Heart right ventricle (tissue), 16 donors: ENCODE measurements at regions of chr1 and their contacts with region 1.

Region 1: GRCh38 chr1:161864577-161864976 is 98.5 kb downstream of the ATF6 start:
- DNase-seq: peak in 1 of 2 donors; percentile 11
- ATAC-seq: peak in 3 of 8 donors; percentile 57 to 65 (median 62)
- H3K4me3 ChIP-seq: no peak overlapping the region
- H3K27ac ChIP-seq: no peak overlapping the region
- H3K4me1 ChIP-seq: peaks cover 0 to 9% (median 0%) of the 10 kb centered on the region in 9 donors
- H3K27me3 ChIP-seq: no peaks in the 10 kb centered on the region
- CTCF ChIP-seq: peak in 7 of 9 donors; percentile 23 to 60 (median 43)

Region 2: DNA sequence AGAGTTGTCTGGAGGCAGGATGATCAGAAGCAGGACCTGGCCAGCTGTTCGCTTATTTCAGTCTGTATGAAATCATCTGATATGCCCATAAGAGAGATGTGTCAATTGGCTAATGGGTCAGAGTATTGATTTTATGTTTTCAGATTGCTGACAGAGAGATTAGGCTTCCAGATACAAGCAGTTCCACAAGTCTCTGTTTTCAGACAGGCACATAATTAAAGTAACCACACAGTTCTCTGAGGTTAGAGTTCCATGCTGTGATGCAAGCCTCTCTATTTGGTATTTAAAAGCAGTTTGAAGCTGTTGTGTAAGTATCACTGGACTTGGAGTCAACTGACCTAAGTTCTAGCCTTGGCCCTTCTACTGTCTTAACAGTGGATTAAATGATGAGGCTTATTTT is 48.4 kb before region 1 on chr1:
- intact Hi-C with region 1: loop called in 1 of 10 experiments (anchors 1 kb)
- DNase-seq: no peak
- ATAC-seq: no peak
- H3K4me3 ChIP-seq: no peak overlapping the region
- H3K27ac ChIP-seq: no peak overlapping the region
- H3K4me1 ChIP-seq: peaks cover 0 to 4% (median 0%) of the 10 kb centered on the region in 9 donors
- H3K27me3 ChIP-seq: no peaks in the 10 kb centered on the region
- CTCF ChIP-seq: no peak